ENCODE measurements at regions of chr7 and their contacts with region 1.

Region 1: DNA sequence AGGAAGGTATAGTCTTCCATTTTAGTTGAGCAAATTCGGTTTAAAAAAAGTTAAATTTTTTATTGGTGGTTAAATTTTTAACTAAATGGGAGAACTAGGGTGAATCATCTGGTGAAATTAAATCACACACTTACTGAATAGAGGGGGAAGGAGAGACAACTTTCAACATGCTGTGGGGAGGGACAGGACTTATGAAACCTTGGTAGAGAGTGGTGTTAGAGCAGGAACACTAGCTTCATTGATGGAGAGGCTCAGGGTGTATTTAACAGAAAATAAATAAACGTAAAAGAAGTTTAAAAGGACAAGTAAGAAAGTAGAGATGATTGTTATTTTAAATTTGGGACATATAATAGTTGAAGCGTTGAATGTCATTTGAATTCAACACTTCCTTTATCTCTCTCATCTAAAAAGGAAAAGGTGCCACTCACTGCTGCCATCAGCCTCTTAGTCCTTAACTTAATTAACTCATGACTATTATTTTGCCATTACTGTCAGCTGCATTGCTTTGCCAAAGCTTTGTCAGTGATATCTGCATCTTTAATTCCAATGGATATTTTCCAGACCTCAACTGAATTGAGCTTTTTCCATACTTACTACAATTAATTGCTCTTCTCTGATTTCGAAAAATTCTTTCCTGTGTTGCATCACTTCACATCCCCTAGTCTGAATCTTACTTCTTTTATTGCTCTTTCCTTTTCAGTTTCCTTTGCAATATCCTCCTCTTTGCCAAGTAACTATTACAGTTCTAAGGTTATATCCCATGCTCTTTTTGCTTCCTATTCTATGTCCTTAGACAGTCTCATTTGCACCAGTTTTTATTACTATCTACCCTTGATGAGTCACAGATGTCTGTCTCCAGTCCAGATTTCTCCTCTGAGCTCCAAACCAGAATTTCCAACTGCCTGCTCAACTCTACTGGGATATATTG is 71.7 kb downstream of the GNAT3 start:
- DNase-seq: no peak
- H3K4me3 ChIP-seq: no peak overlapping the region
- H3K27ac ChIP-seq: no peak overlapping the region
- H3K4me1 ChIP-seq: no peaks in the 10 kb centered on the region
- H3K27me3 ChIP-seq: no peaks in the 10 kb centered on the region
- CTCF ChIP-seq: no peak
- EP300 ChIP-seq: no peak
- POLR2A ChIP-seq: no peak
- RAD21 ChIP-seq: no peak

Region 2: DNA sequence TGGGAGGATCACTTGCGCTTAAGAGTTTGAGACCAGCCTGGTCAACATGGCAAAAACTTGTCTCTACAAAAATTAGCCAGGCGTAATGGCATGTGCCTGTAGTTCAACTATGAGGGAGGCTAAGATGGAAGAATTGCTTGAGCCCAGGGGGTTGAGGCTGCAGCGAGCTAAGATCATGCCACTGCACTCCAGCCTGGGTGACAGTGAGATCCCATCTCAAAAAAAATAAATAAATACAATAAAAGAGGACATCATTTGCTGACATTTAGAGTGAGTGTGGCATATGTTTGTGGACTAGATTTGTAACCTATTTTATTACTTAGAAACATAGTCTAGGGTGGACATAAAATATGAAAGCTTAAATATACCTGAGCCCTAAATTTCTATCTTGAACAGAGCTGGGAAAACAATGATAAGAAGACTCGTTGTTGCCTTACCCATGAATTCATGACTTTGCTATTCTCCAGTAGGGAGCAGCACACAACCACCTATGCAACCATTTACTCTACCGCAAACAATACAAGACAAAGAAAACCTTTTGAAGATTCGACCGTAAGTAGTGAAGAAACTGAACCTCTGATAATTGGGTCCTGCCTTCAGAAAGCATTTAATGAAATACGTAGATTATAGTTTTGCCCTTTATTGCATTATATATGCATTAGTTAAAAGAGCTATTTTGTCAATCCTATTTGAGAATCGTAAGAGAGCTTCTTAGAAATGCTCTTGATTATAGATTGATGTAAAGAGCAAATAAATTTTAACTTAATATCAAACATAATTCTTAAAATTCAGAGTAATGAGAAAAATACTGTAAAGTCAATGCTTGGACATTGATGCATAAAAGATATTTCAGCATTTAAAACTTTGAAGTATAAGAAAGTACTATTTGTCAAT is 11.8 kb before region 1 on chr7:
- CTCF ChIA-PET with region 1: interaction called, 10 read pairs
- POLR2A ChIA-PET with region 1: no interaction called
- DNase-seq: no peak
- H3K4me3 ChIP-seq: no peak overlapping the region
- H3K27ac ChIP-seq: no peak overlapping the region
- H3K4me1 ChIP-seq: 0 out of 7 replicates have a peak, but pooled peaks cover 0 to 3% (median 0%) of the 10 kb centered on the region in 4 experiments
- H3K27me3 ChIP-seq: no peaks in the 10 kb centered on the region
- CTCF ChIP-seq: peak in 2 of 3 experiments; percentile 63 to 70; a peak in 3 of 4 replicates
- EP300 ChIP-seq: no peak
- POLR2A ChIP-seq: no peak
- RAD21 ChIP-seq: peak; percentile 89 to 91

Region 3: GRCh38 chr7:80499350-80499953 is 59.3 kb after region 1 on chr7:
- CTCF ChIA-PET with region 1: no interaction called
- POLR2A ChIA-PET with region 1: no interaction called
- DNase-seq: peak in 1 of 2 experiments; percentile 33
- H3K4me3 ChIP-seq: no peak overlapping the region
- H3K27ac ChIP-seq: no peak overlapping the region
- H3K4me1 ChIP-seq: no peaks in the 10 kb centered on the region
- H3K27me3 ChIP-seq: no peaks in the 10 kb centered on the region
- CTCF ChIP-seq: no peak
- EP300 ChIP-seq: no peak
- POLR2A ChIP-seq: no peak
- RAD21 ChIP-seq: no peak